Activated CD8-positive, alpha-beta T cell treated with anti-CD3 and anti-CD28 coated beads, Interleukin-2, amount 10 ng/mL, durations not matched to agents 7 days and 5 days (primary cell): ENCODE measurements at regions of chr10 and their contacts with region 1.

Region 1: DNA sequence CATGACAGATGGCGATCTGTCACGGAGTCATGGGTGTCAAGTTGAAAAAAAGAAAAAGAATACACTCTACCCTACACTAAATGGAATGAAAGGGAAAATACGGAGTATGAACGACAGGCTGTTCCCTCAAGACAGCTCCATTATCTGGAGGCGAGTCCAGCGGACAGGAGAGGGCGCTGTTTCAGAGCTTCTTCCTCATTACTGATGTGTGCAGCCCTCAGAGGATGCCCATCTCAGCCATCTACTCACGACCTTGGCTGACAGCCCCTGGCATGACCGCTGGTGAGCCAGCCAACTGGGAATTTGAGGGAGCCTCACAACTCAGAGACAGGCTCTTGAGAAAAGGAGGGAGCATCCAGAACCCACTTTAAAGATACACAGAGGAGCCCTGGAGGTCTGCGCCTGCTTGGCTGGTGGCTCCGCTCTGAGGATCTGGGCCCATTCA is 49.6 kb upstream of the SMNDC1 start:
- DNase-seq: peak; percentile 88
- ATAC-seq: peak; percentile 77
- H3K4me3 Mint-ChIP-seq: peak overlapping the region; percentile 16
- H3K27ac Mint-ChIP-seq: peak overlapping the region; percentile 74
- H3K4me1 Mint-ChIP-seq: peaks cover 59% of the 10 kb centered on the region
- H3K27me3 Mint-ChIP-seq: peaks cover 16% of the 10 kb centered on the region

Region 2: DNA sequence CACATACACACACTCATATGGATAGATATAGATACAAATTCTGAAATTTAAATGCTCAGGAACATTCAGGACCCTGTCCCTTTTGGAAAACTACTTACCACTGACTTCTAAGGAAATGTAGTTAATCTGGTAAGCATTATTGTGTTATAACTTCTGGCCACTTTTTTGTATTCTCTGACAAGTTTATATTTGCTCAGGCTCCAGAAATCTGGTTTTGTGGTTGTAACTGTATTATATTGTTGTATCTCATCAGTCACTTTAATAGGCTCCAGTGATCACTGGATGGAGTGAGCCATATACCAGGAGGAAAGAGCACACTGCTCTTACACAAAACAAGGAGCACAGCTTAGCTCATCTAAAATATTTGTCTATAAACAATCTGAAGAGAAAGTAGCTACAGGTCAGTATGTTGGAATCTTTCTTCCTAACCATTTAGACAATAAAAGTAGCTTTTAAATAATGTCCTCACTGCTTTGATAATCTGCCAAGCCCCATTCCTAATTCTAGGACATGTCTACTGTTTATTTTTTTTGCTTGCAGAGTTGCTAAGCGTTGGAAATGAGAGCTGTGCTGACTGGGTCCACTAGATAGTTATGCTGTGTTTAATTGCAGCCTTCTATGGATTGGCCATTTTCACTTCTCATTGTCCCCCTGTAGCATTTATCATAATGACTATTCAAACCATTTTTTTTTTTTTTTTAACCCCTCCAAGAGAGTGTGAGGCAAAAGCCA is 93.4 kb before region 1 on chr10:
- CTCF ChIA-PET with region 1: no interaction called
- POLR2A ChIA-PET with region 1: no interaction called
- DNase-seq: no peak
- ATAC-seq: no peak
- H3K4me3 Mint-ChIP-seq: no peak overlapping the region
- H3K27ac Mint-ChIP-seq: no peak overlapping the region
- H3K4me1 Mint-ChIP-seq: no peaks in the 10 kb centered on the region
- H3K27me3 Mint-ChIP-seq: peaks cover 12% of the 10 kb centered on the region

Region 3: GRCh38 chr10:110326351-110327032 is 27.9 kb before region 1 on chr10:
- CTCF ChIA-PET with region 1: interaction called, 71 read pairs
- POLR2A ChIA-PET with region 1: no interaction called
- DNase-seq: no peak
- ATAC-seq: no peak
- H3K4me3 Mint-ChIP-seq: no peak overlapping the region
- H3K27ac Mint-ChIP-seq: no peak overlapping the region
- H3K4me1 Mint-ChIP-seq: peaks cover 10% of the 10 kb centered on the region
- H3K27me3 Mint-ChIP-seq: peaks cover 24% of the 10 kb centered on the region

Region 4: GRCh38 chr10:110368002-110368401 is 13.7 kb after region 1 on chr10:
- CTCF ChIA-PET with region 1: interaction called, 38 read pairs
- POLR2A ChIA-PET with region 1: interaction called, 5 read pairs
- DNase-seq: no peak
- ATAC-seq: no peak
- H3K4me3 Mint-ChIP-seq: no peak overlapping the region
- H3K27ac Mint-ChIP-seq: no peak overlapping the region
- H3K4me1 Mint-ChIP-seq: peaks cover 32% of the 10 kb centered on the region
- H3K27me3 Mint-ChIP-seq: no peaks in the 10 kb centered on the region

Region 5: DNA sequence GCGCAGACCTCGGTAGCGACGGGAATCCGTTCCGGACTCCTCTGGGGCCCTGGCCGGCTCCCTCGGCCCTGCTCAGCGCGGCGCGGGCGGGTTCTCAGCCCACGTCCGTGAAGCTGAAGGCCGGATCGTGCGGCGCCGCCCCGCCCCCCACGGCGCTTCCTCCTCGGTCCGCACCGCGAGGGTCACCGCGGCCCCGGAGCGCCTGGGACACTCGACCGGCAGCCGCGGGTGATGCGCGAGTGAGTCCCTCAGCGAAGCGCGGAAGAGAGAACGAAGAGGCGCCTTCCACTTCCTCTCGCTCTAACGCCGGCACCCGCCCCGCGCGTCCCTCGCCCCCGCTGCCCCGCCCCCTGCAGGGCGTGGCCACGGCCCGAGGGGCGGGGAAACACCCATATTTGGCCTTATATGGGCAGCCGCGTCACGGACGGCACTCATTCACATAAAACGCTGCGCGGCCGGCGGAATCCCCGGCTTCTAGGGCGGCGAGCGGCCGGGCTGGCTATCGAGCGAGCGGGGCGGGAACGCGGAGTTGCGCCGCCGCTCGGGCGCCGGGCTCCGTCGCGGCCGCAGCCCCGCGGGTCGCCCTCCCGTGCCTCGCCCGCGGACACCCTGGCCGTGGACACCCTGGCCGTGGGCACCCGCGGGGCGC is 143.2 kb after region 1 on chr10 and contains the start of gene DUSP5:
- CTCF ChIA-PET with region 1: interaction called, 85 read pairs
- POLR2A ChIA-PET with region 1: interaction called, 22 read pairs
- DNase-seq: peak; percentile 95
- ATAC-seq: peak; percentile 74
- H3K4me3 Mint-ChIP-seq: peak within 1 kb of the TSS; percentile 97
- H3K27ac Mint-ChIP-seq: peak within 1 kb of the TSS; percentile 89
- H3K4me1 Mint-ChIP-seq: peaks cover 56% of the 10 kb centered on the region
- H3K27me3 Mint-ChIP-seq: no peaks in the 10 kb centered on the region
- total RNA-seq, gene DUSP5: 26.8 to 27.8 TPM